Mucosa of descending colon (tissue), 3 donors: ENCODE measurements at regions of chr13 and their contacts with region 1.

Region 1: DNA sequence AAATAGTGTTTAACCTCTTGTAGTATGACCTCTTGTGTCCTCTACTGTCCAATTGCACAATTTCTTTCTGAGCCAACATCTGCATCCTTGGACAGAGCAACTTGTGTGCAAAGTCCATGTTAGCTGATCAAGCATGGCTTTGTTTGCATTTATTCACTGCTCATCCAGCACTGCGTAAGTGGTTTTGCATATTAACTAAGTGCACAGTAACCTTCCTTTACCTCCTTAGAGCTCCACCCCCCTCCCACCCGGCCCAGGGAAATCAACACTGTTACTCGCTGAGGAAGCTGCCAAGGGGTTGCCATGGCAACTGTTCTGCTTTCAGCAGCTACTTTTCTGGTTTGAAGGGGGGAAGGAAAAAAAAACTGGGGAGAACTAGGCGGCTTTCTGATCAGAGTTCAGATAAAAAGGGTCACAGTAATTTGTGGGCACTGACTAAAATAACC is 153.5 kb upstream of the KLF12 start:
- DNase-seq: peak; percentile 69 to 88 (median 88)
- ATAC-seq: peak; percentile 85
- H3K4me3 ChIP-seq: no peak overlapping the region
- H3K4me1 ChIP-seq: peaks cover 20% of the 10 kb centered on the region
- CTCF ChIP-seq: no peak

Region 2: GRCh38 chr13:73835138-73835721 is 452.5 kb before region 1 on chr13:
- intact Hi-C with region 1: loop called in 1 of 2 experiments (anchors 10 kb)
- DNase-seq: no peak
- ATAC-seq: peak; percentile 55
- H3K4me3 ChIP-seq: no peak overlapping the region
- H3K4me1 ChIP-seq: no peaks in the 10 kb centered on the region
- CTCF ChIP-seq: peak; percentile 20

Region 3: DNA sequence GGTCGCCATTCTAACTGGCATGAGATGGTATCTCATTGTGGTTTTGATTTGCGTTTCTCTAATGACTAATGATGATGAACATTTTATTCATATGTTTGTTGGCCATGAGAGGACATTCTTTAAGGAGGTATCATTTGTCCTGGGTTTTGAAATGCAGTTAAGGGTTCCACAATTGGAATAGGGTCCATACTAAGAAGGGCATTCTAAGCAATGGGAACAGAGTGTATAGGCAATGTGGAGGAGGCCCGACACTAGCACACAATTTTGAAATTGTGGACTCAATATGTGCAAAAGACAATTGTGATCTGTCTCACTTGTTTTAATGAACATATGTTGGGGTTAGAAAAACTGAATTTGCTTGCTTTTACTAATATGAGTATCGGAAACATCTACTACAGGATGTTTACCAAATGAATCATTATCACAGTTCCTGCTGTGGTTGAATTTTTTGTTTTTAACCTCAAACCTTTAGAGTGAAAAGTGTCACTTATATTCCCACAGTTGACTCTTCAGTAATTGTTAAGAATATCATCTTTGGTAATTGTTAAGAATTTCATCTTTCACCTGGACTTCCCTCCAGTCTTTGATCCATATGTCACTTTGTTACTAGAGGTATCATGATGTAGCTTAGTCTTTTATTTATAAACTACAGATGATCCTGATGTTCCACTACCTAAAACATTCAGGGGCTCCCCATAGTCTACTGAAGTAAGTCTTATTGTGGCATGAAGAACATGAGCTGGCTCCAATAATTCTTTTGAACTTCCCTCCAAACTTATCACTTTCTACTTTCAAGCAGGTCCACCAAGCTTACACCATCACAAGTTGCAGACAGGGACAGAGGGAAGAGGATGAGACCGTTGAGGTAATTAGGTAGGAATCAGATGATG is 43.9 kb before region 1 on chr13:
- intact Hi-C with region 1: no loop called
- DNase-seq: no peak
- ATAC-seq: peak; percentile 57
- H3K4me3 ChIP-seq: no peak overlapping the region
- H3K4me1 ChIP-seq: no peaks in the 10 kb centered on the region
- CTCF ChIP-seq: no peak

Region 4: DNA sequence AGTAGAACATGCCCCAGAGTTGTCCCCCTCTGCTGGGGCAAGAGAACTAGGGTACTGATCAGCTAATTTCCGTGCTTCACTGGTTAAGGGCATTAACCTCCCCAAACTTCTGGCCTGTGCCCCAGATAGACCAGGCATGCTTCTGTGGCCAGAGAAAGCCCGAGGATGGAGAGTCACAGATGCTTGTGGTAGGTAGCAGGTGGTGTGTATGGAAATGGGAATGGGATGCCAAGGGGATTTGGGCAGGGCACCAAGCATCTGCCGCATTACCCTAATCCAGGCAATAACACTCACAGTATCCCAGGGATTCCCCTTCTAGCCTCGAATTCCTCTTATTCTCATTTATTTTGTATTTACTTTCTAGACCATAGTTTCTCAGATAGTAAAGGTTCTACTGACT is 28.8 kb before region 1 on chr13:
- intact Hi-C with region 1: no loop called
- DNase-seq: no peak
- ATAC-seq: no peak
- H3K4me3 ChIP-seq: no peak overlapping the region
- H3K4me1 ChIP-seq: no peaks in the 10 kb centered on the region
- CTCF ChIP-seq: no peak